GM10248 (cell line): ENCODE measurements at regions of chr12 and their contacts with region 1.

Region 1: GRCh38 chr12:100185361-100185894 is 15.2 kb upstream of the ACTR6 start:
- DNase-seq: no peak
- CTCF ChIP-seq: no peak

Region 2: DNA sequence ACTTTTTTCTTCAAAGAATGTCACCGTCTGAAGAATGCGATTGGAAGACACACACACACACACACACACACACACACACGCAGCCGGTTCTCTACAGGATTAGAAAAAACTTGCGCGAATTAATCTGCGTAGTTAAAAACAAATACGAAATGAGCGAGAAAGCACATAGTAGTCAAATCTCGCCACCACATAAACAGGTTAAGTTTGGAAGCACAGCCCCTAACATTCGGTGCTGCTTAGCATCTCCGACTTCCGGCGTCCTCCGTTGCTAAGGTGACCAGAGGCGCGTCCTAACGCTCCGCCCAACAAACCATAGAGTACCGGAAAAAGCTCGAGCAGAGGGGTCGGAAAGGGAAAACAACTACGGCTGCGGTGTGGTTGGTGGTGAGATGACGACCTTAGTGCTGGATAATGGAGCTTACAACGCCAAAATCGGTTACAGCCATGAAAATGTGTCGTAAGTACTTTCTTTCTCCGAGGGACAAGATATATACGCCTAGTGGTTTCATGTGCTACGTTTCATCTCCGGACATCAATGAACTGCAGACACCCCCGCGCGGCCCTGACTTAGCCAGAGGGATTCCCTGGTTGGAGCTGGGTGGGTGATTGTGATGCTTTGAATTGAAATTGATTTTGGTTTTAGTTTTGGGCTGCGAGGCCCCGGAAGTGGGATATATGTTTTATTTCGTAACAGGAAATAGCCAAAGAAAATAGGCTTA is 15.2 kb after region 1 on chr12 and contains the start of gene ACTR6:
- CTCF ChIA-PET with region 1: interaction called, 19 read pairs
- POLR2A ChIA-PET with region 1: interaction called, 5 read pairs
- DNase-seq: peak; percentile 92
- CTCF ChIP-seq: no peak